ENCODE measurements at regions of chr22 and their contacts with region 1.

Region 1: DNA sequence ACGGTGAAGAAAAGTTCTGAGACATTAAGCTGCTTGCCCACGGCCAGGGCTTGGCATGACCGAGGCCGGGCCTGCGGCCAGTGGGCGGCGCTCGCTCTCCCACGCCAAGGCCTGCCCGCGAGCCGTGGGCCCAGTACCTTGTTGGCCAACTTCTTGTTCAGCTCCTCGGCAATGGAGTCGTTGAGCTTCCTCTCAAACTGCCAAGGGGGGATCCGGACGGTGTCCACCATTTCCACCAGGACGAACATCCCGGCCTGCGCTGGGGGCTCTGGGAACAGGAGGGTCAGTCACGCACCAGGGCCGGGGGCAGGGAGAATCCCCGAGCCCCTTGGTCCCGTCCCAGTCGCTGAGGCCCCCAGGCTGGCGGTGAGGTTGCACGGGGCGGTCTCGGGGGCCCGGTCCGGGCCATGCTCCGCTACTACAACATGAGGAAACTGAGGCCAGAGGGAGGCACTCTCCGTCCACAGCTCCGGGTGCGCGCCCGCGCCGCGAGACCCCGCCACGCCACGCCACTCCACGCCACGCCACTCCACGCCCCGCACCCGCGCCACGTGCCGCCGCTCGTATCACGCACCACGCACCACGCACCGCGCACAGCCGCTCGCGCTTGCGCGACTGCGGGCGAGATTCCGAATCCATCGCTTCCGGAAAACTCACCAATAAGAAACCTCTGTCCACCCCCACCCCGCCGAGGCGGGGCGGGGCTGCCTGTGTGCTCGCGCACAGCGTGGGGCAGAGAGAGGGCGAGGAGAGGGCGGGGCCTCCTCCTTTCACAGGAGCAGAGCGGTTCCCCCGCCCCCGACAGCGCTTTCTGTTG is at the start of gene POLR3H:
- DNase-seq: peak; percentile 98 to 100 (median 99)
- H3K4me3 ChIP-seq: peak within 1 kb of the TSS; percentile 34 to 68 (median 59)
- H3K27ac ChIP-seq: peak within 1 kb of the TSS; percentile 81 to 92 (median 91)
- H3K4me1 ChIP-seq: peaks cover 24 to 46% of the 10 kb centered on the region in 2 donors
- H3K27me3 ChIP-seq: no peaks in the 10 kb centered on the region
- CTCF ChIP-seq: peak; percentile 21 to 57 (median 48)
- POLR2A ChIP-seq: peak; percentile 15 to 64
- total RNA-seq, gene POLR3H: 18.7 to 92.6 (median 37.9) TPM

Region 2: DNA sequence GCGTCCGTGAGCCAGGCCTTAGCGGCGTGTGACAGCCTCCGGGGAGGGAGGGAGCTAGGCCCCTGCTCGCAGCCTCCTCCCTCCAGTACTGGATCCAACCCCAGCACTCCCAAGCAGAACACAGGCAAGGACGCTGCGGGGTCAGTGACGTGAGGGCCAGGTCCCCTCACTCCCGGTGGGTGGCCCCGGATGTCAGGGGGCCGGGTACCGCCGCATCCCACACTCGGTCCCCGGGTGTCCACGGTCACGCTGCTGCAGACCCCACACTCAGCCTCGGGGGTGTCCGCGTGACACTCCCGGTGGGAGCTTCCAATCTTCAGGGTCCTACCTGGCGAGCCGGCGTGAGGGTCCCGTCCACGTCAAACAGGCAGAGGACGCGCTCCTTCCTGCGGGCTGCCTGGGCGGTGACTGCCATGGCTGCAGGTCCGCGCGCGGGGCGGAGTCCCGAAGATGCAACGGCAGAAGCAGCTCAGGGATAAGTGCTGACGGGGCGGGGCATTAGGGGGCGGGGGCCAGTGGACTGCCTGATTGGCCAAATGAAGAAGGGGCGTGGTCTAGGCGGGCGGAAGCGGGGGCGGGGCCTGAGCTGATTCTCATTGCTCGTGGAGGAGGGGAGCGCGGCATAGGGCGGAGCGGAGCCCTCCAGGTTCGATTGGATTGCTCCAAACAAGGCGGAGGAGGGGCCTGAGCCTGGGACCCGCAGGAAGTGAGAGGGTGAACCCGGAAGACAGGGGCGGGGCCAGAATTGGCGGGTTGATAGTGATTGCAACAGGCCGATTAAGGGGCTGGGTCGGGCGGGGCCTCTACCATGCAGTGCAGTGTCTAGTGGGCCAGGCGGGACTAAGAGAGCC is 45.6 kb after region 1 on chr22 and contains the start of gene PMM1:
- intact Hi-C with region 1: loop called in 1 of 2 experiments (anchors 10 kb)
- DNase-seq: peak; percentile 100
- H3K4me3 ChIP-seq: peak within 1 kb of the TSS; percentile 62 to 96 (median 86)
- H3K27ac ChIP-seq: peak within 1 kb of the TSS; percentile 44 to 91 (median 81)
- H3K4me1 ChIP-seq: peaks cover 8 to 15% of the 10 kb centered on the region in 2 donors
- H3K27me3 ChIP-seq: no peaks in the 10 kb centered on the region
- CTCF ChIP-seq: no peak
- POLR2A ChIP-seq: peak; percentile 89 to 97
- total RNA-seq, gene PMM1: 39.4 to 105 (median 71.6) TPM

Region 3: GRCh38 chr22:41596776-41597634 is 52.9 kb after region 1 on chr22:
- intact Hi-C with region 1: loop called (anchors 5 to 10 kb)
- DNase-seq: peak; percentile 73 to 88 (median 84)
- H3K4me3 ChIP-seq: no peak overlapping the region
- H3K27ac ChIP-seq: peak overlapping the region; percentile 18 to 91 (median 84)
- H3K4me1 ChIP-seq: peaks cover 17 to 21% of the 10 kb centered on the region in 2 donors
- H3K27me3 ChIP-seq: no peaks in the 10 kb centered on the region
- CTCF ChIP-seq: peak; percentile 70 to 93 (median 90)
- POLR2A ChIP-seq: peak in 1 of 2 donors; percentile 40